ENCODE measurements at regions of chr14 and their contacts with region 1.

Region 1: GRCh38 chr14:60648934-60649874 is at the start of gene SIX1:
- DNase-seq: peak; percentile 94
- H3K4me3 ChIP-seq: peak within 1 kb of the TSS; percentile 78
- H3K27ac ChIP-seq: peak within 1 kb of the TSS; percentile 78
- H3K4me1 ChIP-seq: peaks cover 21% of the 10 kb centered on the region
- H3K27me3 ChIP-seq: no peaks in the 10 kb centered on the region
- CTCF ChIP-seq: no peak
- total RNA-seq, gene SIX1: 24.0 and 25.0 TPM in 2 replicates

Region 2: GRCh38 chr14:60622917-60623257 is 26.3 kb before region 1 on chr14:
- CTCF ChIA-PET with region 1: interaction called, 13 read pairs
- POLR2A ChIA-PET with region 1: no interaction called
- intact Hi-C with region 1: no loop called
- DNase-seq: no peak
- H3K4me3 ChIP-seq: no peak overlapping the region
- H3K27ac ChIP-seq: no peak overlapping the region
- H3K4me1 ChIP-seq: peaks cover 3% of the 10 kb centered on the region
- H3K27me3 ChIP-seq: no peaks in the 10 kb centered on the region
- CTCF ChIP-seq: no peak

Region 3: GRCh38 chr14:60724137-60724619 is 75.0 kb after region 1 on chr14 and contains the start of gene SIX4:
- CTCF ChIA-PET with region 1: no interaction called
- POLR2A ChIA-PET with region 1: no interaction called
- intact Hi-C with region 1: loop called (anchors 2 kb)
- DNase-seq: peak; percentile 84
- H3K4me3 ChIP-seq: peak within 1 kb of the TSS; percentile 84
- H3K27ac ChIP-seq: peak within 1 kb of the TSS; percentile 79
- H3K4me1 ChIP-seq: peaks cover 9% of the 10 kb centered on the region
- H3K27me3 ChIP-seq: no peaks in the 10 kb centered on the region
- CTCF ChIP-seq: no peak
- total RNA-seq, gene SIX4: 13.6 and 16.0 TPM in 2 replicates

Region 4: DNA sequence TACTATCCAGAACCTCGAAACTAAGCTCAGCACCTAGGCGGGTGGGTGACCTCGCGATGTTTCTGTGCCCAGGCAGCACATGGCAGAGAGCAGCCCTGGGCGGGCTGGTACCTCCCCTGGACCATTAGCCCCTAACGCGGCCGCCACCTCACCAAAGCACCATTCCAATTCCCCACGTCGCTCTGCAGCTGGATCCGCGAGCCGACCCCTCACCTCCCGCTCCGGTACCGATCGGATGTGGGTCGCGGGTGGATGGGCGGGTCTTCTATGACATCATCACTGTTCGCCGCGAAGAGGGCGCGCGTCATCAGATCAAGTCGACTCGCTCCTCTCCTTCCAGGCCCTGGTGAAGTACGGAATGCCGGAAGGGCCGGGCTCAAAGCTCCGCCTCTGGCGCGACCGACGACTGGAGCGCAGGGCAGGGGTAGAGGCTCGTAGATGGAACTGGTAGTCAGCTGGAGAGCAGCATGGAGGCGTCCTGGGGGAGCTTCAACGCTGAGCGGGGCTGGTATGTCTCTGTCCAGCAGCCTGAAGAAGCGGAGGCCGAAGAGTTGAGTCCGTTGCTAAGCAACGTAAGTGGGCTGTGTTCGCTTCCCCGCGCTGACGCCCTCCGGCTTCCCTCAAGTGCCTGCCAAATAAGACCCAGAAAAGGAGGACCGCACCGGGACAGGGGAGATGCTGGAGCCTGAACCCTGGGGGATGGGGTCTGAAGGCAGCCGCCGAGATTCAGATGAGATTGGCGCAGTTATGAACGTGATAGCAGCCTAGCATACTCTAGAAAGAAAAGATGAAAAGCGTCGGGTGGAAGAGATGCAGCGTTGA is 331.8 kb after region 1 on chr14 and contains the starts of genes SLC38A6 and TRMT5:
- CTCF ChIA-PET with region 1: no interaction called
- POLR2A ChIA-PET with region 1: no interaction called
- intact Hi-C with region 1: loop called (anchors 2 kb)
- DNase-seq: peak; percentile 97
- H3K4me3 ChIP-seq: peak within 1 kb of the TSS; percentile 84
- H3K27ac ChIP-seq: peak within 1 kb of the TSS; percentile 94
- H3K4me1 ChIP-seq: peaks cover 26% of the 10 kb centered on the region
- H3K27me3 ChIP-seq: no peaks in the 10 kb centered on the region
- CTCF ChIP-seq: no peak
- total RNA-seq, gene SLC38A6: 25.8 and 28.0 TPM in 2 replicates
- total RNA-seq, gene TRMT5: 21.9 and 26.2 TPM in 2 replicates

Region 5: DNA sequence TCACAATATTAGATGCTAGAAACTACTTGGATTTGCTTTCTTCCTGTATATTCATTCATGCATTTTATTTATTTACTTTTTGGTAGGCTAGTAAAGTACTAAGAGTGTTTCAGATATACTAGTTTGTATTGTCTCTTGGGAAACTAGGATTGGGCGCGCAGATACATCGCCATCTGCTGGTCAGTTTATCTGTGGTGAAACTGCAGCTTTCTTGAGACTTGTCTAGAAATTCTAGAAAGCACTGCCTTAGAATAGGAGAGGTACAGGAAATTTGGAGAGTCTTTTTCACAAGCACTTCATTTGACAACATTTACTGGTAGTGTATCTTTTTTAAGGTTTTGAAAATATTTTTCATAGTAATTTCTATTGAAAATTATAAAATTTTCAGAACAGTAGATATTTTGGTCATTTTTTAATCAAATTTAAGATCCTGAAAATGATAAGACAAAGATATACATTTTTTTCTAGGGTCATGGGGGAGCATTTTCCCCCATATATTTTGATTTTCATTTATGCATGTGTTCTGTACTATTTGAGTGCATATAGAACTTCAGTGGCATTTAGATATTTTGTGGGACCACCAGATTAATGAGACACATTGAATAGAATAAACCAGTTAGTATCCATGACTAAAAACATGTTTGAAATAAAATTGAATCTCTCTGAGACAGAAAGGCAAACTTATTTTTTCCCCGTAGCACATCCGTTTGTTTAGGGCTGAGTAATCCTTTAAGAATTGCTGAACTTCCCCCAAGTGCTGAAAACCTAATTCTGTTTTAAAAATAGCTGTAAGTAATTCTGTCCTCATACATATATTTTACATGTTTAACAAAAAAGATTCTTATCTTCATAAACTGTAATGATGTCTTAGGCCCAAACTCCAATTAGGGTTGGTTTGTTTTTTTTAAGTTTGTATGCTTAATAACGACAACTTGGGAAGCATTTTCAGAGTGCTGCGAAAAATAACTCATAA is 376.3 kb after region 1 on chr14:
- CTCF ChIA-PET with region 1: no interaction called
- POLR2A ChIA-PET with region 1: no interaction called
- intact Hi-C with region 1: loop called (anchors 2 kb)
- DNase-seq: peak; percentile 88
- H3K4me3 ChIP-seq: no peak overlapping the region
- H3K27ac ChIP-seq: peak overlapping the region; percentile 69
- H3K4me1 ChIP-seq: peaks cover 46% of the 10 kb centered on the region
- H3K27me3 ChIP-seq: no peaks in the 10 kb centered on the region
- CTCF ChIP-seq: peak; percentile 95